ENCODE measurements at regions of chr19 and their contacts with region 1.

Region 1: DNA sequence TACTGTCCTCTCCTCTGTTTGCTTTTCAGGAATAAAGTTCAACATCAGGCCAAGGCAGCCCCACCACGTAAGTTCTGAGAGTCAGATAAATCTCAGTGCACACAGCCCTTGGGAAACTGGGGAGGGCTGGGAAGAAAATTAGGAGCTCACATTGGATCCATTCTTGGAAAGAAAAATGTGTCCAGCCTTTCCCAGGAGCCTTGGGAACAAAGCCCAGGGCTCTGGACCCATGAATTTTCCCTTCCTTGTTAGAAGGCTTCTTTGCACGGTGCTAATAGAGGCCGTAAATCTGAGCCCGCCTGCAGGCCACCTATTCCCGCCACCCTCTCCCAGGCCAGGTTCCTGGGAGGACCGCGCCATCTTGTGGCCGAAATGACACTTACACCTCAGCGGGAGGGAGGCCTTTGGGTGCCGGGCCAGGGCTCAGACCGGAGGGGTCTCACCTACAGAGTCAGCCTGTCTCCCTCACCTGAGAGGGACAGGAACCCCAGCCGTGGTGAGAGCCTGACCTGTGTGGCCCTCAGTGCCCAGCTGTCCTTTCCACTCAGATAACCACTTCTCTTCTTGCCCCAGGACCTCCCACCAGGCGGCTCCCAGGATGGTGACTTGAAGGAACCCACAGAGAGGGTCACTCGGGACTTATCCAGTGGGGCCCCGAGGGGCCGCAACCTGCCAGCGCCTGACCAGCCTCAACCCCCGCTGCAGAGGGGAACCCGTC is 25.1 kb upstream of the KCTD15 start:
- DNase-seq: peak; percentile 76
- ATAC-seq: peak; percentile 73 to 76

Region 2: GRCh38 chr19:33241530-33242101 is 529.9 kb before region 1 on chr19:
- intact Hi-C with region 1: loop called (anchors 10 kb)
- DNase-seq: no peak
- ATAC-seq: peak; percentile 35 to 55

Region 3: GRCh38 chr19:33430674-33431277 is 340.8 kb before region 1 on chr19:
- intact Hi-C with region 1: loop called (anchors 1 to 5 kb)
- DNase-seq: peak; percentile 69
- ATAC-seq: peak; percentile 76 to 84